Activated B cell treated with CpG ODN at 0.5 μM for 24 hours (primary cell): ENCODE measurements at regions of chr12 and their contacts with region 1.

Region 1: GRCh38 chr12:32679091-32679919 is at the start of gene DNM1L:
- DNase-seq: peak; percentile 86
- ATAC-seq: peak; percentile 95
- H3K4me3 Mint-ChIP-seq: peak within 1 kb of the TSS; percentile 90
- H3K27ac Mint-ChIP-seq: peak within 1 kb of the TSS; percentile 83
- H3K4me1 Mint-ChIP-seq: peaks cover 36% of the 10 kb centered on the region
- H3K27me3 Mint-ChIP-seq: no peaks in the 10 kb centered on the region
- CTCF ChIP-seq: no peak
- total RNA-seq, gene DNM1L: 67.8 and 83.1 TPM in 2 replicates

Region 2: GRCh38 chr12:30754709-30755394 is 1924.5 kb before region 1 on chr12 and contains the start of gene CAPRIN2:
- CTCF ChIA-PET with region 1: no interaction called
- POLR2A ChIA-PET with region 1: no interaction called
- intact Hi-C with region 1: loop called (anchors 1 kb)
- DNase-seq: peak; percentile 97
- ATAC-seq: peak; percentile 88
- H3K4me3 Mint-ChIP-seq: peak within 1 kb of the TSS; percentile 95
- H3K27ac Mint-ChIP-seq: peak within 1 kb of the TSS; percentile 90
- H3K4me1 Mint-ChIP-seq: peaks cover 20% of the 10 kb centered on the region
- H3K27me3 Mint-ChIP-seq: no peaks in the 10 kb centered on the region
- CTCF ChIP-seq: no peak
- total RNA-seq, gene CAPRIN2: 17.5 and 18.7 TPM in 2 replicates

Region 3: DNA sequence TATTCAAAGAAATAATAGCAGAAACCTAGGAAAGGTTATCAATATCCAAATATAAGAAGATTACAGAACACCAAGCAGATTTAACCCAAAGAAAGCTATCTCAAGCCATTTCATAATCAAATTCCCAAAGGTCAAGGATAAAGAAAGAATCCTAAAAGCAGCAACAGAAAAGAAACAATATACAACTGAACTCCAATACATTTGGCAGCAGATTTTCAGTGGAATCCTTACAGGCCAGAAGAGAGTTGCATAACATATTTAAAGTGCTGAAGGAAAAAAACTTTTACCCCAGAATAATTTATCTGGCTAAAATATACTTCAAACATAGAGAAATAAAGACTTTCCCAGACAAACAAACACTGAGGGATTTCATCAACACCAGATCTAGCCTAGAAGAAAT is 1142.6 kb before region 1 on chr12:
- CTCF ChIA-PET with region 1: no interaction called
- POLR2A ChIA-PET with region 1: interaction called, 12 read pairs
- intact Hi-C with region 1: no loop called
- DNase-seq: no peak
- ATAC-seq: no peak
- H3K4me3 Mint-ChIP-seq: no peak overlapping the region
- H3K27ac Mint-ChIP-seq: no peak overlapping the region
- H3K4me1 Mint-ChIP-seq: peaks cover 80% of the 10 kb centered on the region
- H3K27me3 Mint-ChIP-seq: no peaks in the 10 kb centered on the region
- CTCF ChIP-seq: no peak

Region 4: DNA sequence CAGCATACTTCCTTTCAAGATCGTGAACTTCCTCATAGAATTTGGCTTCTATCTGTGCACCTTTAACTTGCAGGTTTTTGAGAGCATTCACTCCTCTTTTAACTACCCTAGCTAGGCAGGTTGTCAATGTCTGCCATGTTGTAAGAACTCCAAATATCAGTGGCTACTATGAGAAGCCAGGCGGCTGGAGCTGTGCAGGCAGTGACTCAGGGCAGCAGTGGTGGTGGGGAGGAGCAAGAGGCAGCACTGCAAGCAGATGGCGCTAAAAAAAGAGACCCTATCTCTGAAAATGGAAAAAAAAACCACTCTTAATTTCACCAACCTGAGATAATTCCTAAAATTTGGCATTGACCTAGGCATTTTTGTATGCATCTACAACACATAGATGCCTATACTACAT is 47.9 kb after region 1 on chr12:
- CTCF ChIA-PET with region 1: no interaction called
- POLR2A ChIA-PET with region 1: interaction called, 5 read pairs
- intact Hi-C with region 1: loop called (anchors 5 kb)
- DNase-seq: no peak
- ATAC-seq: no peak
- H3K4me3 Mint-ChIP-seq: no peak overlapping the region
- H3K27ac Mint-ChIP-seq: no peak overlapping the region
- H3K4me1 Mint-ChIP-seq: no peaks in the 10 kb centered on the region
- H3K27me3 Mint-ChIP-seq: no peaks in the 10 kb centered on the region
- CTCF ChIP-seq: no peak

Region 5: DNA sequence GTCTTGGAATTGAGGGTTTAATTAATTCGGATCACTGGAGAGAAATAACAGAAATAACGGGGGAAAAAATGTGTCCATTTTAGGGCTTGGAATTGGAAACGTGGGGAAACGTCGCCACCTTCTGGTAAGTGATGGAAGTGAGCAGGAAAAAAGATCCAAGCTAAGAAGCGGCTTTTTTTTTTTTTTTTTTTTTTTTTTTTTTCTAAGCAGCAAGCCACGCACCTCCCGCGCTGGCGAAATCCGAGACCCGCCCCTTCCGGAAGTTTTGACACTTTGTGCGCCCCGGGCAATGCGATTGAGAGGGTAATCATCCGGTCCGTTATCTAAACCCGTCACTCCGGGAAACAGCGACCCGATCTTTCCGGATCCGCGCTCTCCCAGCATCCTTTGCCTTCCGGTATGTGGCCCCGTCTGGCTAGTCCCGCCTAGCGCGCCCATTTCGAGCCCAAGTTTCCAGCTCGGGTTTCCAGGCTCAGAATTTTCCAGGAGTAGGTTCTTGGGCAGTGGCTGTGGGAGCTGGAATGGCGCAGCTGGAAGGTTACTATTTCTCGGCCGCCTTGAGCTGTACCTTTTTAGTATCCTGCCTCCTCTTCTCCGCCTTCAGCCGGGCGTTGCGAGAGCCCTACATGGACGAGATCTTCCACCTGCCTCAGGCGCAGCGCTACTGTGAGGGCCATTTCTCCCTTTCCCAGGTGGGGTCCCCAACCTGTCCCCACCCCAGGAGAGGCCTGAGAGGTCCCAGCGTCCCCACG is 1343.0 kb after region 1 on chr12 and contains the start of gene ALG10:
- CTCF ChIA-PET with region 1: interaction called, 3 read pairs
- POLR2A ChIA-PET with region 1: no interaction called
- intact Hi-C with region 1: loop called (anchors 1 kb)
- DNase-seq: peak; percentile 90
- ATAC-seq: peak; percentile 98
- H3K4me3 Mint-ChIP-seq: peak within 1 kb of the TSS; percentile 94
- H3K27ac Mint-ChIP-seq: peak within 1 kb of the TSS; percentile 92
- H3K4me1 Mint-ChIP-seq: peaks cover 16% of the 10 kb centered on the region
- H3K27me3 Mint-ChIP-seq: peaks cover 4% of the 10 kb centered on the region
- CTCF ChIP-seq: peak; percentile 53
- total RNA-seq, gene ALG10: 14.8 and 19.6 TPM in 2 replicates